PC-3 (cell line): ENCODE measurements at regions of chr2 and their contacts with region 1.

Region 1: GRCh38 chr2:61220768-61221167 is 58.8 kb downstream of the C2orf74 start:
- DNase-seq: peak; percentile 57
- ATAC-seq: peak; percentile 49
- H3K4me3 ChIP-seq: no peak overlapping the region
- H3K27ac ChIP-seq: no peak overlapping the region
- H3K4me1 ChIP-seq: peaks cover 19% of the 10 kb centered on the region
- H3K27me3 ChIP-seq: no peaks in the 10 kb centered on the region
- CTCF ChIP-seq: no peak

Region 2: DNA sequence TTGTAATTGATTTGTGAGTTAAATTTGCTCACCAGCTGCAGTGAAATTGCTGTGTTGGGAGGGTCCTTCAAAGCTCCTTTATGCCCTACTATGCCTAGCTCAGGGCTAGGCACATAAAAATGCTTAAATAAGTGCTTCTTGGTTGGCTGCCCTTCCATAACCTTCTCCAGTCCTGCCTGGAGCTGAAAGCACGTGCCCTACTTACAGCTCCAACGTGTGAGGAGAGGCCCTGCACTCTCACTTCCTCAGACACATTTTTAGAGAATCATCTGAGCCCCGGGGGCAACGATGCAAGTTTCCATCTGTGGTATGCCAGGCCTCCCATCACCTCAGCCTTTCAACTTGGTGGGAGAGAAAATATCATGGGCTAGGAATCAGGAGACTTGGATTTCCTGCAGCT is 870.0 kb before region 1 on chr2:
- CTCF ChIA-PET with region 1: no interaction called
- POLR2A ChIA-PET with region 1: no interaction called
- intact Hi-C with region 1: no loop called
- DNase-seq: no peak
- ATAC-seq: no peak
- H3K4me3 ChIP-seq: no peak overlapping the region
- H3K27ac ChIP-seq: no peak overlapping the region
- H3K4me1 ChIP-seq: peaks cover 4% of the 10 kb centered on the region
- H3K27me3 ChIP-seq: peaks cover 39% of the 10 kb centered on the region; the same call in 1 of the 2 replicates
- CTCF ChIP-seq: no peak

Region 3: GRCh38 chr2:61233581-61233980 is 12.8 kb after region 1 on chr2:
- CTCF ChIA-PET with region 1: no interaction called
- POLR2A ChIA-PET with region 1: no interaction called
- intact Hi-C with region 1: no loop called
- DNase-seq: no peak
- ATAC-seq: no peak
- H3K4me3 ChIP-seq: no peak overlapping the region
- H3K27ac ChIP-seq: no peak overlapping the region
- H3K4me1 ChIP-seq: no peaks in the 10 kb centered on the region
- H3K27me3 ChIP-seq: no peaks in the 10 kb centered on the region
- CTCF ChIP-seq: no peak

Region 4: DNA sequence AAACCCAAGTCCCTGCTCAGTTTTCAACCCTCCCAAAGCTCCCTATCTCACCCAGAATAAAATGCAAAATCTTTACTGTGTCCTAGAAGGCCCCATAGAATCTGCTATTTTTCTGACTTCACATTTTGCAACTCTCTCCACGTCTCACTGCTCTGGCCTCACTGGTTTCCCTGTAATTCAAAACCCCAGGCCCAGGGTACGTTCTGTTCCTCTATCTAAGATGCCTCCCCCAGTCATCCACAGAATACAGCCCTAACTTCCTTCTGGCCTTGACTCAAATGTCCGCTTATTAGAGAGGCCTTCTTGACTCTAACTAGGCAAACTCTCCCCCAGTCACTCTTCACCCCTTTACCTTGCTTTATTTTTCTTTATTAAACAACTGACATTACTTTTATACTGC is 591.1 kb after region 1 on chr2:
- CTCF ChIA-PET with region 1: no interaction called
- POLR2A ChIA-PET with region 1: interaction called, 16 read pairs
- intact Hi-C with region 1: no loop called
- DNase-seq: no peak
- ATAC-seq: no peak
- H3K4me3 ChIP-seq: no peak overlapping the region
- H3K27ac ChIP-seq: no peak overlapping the region
- H3K4me1 ChIP-seq: no peaks in the 10 kb centered on the region
- H3K27me3 ChIP-seq: no peaks in the 10 kb centered on the region
- CTCF ChIP-seq: no peak